ENCODE measurements at regions of chr17 and their contacts with region 1.

Region 1: DNA sequence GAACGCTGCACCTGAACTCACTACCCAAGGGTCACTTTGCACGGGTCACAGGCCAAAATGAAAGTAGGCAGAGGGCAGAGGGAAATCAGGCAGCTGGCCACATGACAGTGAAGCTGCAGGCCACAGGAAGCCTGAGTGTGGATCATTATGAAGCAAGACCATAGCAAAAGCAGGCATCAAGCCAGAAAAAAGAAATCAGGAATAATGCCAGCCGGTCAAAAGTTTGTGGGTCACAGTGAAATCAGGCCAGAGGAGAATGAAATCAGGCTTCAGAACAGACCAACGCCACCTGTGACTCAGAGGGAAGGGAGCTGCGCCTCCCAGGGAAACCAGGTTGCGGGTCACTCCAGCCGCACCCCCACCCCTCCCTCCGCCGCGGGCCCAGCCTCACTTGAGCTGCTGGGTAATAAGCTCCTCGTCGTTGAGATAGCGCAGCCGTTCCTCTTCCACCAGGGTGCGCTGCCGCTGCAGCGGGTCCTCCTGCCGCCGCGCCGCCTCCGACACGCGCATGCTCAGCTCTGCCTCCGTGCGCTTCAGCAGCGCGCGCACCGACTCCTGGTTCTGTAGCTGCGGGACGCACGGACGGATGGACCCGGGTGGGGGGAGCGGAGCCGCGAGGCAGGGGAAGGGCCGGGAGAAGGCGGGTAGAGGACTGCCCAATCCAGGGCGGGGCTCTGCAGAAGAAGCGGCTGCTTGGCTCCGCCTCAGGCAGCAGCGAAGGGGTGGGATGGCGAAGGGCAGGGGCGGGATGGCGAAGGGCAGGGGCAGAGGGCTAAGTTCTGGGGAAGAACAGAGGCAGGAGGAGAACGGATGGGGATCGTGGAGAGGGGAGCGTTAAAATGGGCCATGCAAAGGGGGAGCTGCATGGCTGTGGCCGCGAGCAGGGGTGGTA is 47.7 kb downstream of the SRCIN1 start:
- DNase-seq: peak; percentile 95 to 96
- H3K4me3 ChIP-seq: peak overlapping the region; percentile 57; the same call in 1 of the 2 replicates
- H3K27ac ChIP-seq: peak overlapping the region; percentile 91
- H3K4me1 ChIP-seq: peaks cover 54% of the 10 kb centered on the region
- H3K27me3 ChIP-seq: no peaks in the 10 kb centered on the region
- CTCF ChIP-seq: peak; percentile 78

Region 2: DNA sequence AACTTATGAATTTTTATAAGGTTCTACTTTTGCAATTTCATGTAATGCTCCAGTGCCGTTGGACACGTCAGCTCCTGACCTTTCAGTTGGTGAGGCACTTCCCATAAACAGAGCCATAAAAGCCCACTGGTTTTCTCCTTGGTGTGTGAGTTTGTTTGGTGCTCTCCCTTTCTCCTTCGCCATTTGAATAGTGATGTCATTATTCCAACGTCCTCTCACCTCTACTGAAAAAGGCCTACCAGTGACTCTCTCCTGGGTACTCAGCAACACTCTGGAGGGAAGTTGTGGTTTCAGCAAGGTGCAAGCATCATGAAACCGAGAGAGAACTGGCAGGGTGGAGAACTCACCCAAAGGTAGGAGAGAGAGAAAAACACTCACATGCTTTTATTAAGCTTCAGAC is 783.6 kb before region 1 on chr17:
- CTCF ChIA-PET with region 1: no interaction called
- POLR2A ChIA-PET with region 1: no interaction called
- intact Hi-C with region 1: no loop called
- DNase-seq: no peak
- H3K4me3 ChIP-seq: no peak overlapping the region
- H3K27ac ChIP-seq: no peak overlapping the region
- H3K4me1 ChIP-seq: no peaks in the 10 kb centered on the region
- H3K27me3 ChIP-seq: no peaks in the 10 kb centered on the region
- CTCF ChIP-seq: no peak

Region 3: DNA sequence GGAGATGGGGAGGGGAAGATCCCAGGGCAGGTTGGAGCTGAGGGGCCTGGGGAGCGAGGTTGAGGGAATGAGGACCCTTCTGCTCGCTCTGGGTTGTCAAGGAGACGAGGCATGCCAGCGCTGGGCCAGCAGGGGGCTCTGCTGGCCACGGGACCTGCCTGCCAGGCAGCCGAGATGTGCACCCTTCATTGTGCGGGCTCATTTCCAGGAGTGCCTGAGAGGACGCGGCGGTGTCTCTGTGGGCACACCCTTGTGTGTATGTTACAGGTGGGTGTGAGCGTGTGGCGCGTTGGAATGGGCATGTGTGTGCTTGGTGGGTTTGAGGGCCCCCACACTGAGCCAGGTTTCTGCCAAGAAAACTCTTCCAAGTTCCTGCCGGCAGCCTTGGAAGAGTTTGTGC is 113.9 kb before region 1 on chr17:
- CTCF ChIA-PET with region 1: interaction called, 3 read pairs
- POLR2A ChIA-PET with region 1: interaction called, 13 read pairs
- intact Hi-C with region 1: no loop called
- DNase-seq: peak in 1 of 2 experiments; percentile 72
- H3K4me3 ChIP-seq: no peak overlapping the region
- H3K27ac ChIP-seq: no peak overlapping the region
- H3K4me1 ChIP-seq: peaks cover 48% of the 10 kb centered on the region
- H3K27me3 ChIP-seq: no peaks in the 10 kb centered on the region
- CTCF ChIP-seq: peak; percentile 91

Region 4: DNA sequence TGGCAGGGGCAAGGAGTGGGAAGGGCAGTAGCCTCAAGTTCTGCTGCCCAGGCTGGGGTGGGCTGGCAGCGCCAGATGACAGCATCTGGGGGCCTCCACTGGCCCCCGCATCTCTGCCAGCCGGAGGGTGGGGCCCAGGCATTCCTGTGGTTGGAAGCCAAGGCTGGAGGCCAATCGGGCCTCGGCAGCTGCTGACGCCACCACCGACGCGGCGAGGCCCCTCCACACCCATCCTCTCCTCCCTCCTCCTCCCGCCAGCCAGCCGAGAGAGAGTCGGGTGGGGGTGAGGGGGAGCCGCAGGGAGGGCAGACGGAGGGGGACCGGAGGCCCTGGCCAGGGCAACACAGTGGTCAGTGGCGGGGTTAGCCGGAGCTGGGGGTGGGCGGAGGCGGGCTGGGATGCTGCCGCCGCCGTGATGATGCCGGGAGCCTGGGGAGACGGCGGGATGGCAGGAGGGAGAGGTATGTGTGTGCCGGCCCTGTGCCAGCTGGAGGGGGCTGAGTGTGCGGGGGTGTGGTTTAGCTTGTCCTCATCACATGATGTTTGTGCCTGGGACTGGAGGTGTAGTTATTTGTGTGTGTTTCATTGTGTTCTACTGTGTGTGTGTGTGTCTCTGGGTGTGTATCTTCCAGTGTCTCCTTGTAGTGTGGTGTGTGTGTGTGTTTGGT is 93.2 kb before region 1 on chr17:
- CTCF ChIA-PET with region 1: no interaction called
- POLR2A ChIA-PET with region 1: interaction called, 20 read pairs
- intact Hi-C with region 1: no loop called
- DNase-seq: peak in 1 of 2 experiments; percentile 89
- H3K4me3 ChIP-seq: no peak overlapping the region
- H3K27ac ChIP-seq: no peak overlapping the region
- H3K4me1 ChIP-seq: no peaks in the 10 kb centered on the region; the same call in 1 of the 2 replicates
- H3K27me3 ChIP-seq: no peaks in the 10 kb centered on the region
- CTCF ChIP-seq: no peak

Region 5: GRCh38 chr17:38572669-38573365 is 14.7 kb after region 1 on chr17:
- CTCF ChIA-PET with region 1: interaction called, 4 read pairs
- POLR2A ChIA-PET with region 1: no interaction called
- intact Hi-C with region 1: loop called (anchors 2 kb)
- DNase-seq: peak in 1 of 2 experiments; percentile 47
- H3K4me3 ChIP-seq: peak overlapping the region; percentile 54; the same call in 1 of the 2 replicates
- H3K27ac ChIP-seq: no peak overlapping the region
- H3K4me1 ChIP-seq: peaks cover 11% of the 10 kb centered on the region
- H3K27me3 ChIP-seq: no peaks in the 10 kb centered on the region
- CTCF ChIP-seq: no peak

Region 6: GRCh38 chr17:38584350-38584925 is 26.4 kb after region 1 on chr17:
- CTCF ChIA-PET with region 1: interaction called, 27 read pairs
- POLR2A ChIA-PET with region 1: no interaction called
- intact Hi-C with region 1: loop called (anchors 1 kb)
- DNase-seq: peak; percentile 81 to 91
- H3K4me3 ChIP-seq: peak overlapping the region; percentile 41; the same call in 1 of the 2 replicates
- H3K27ac ChIP-seq: peak overlapping the region; percentile 84
- H3K4me1 ChIP-seq: peaks cover 57% of the 10 kb centered on the region
- H3K27me3 ChIP-seq: no peaks in the 10 kb centered on the region
- CTCF ChIP-seq: peak; percentile 95

Region 7: DNA sequence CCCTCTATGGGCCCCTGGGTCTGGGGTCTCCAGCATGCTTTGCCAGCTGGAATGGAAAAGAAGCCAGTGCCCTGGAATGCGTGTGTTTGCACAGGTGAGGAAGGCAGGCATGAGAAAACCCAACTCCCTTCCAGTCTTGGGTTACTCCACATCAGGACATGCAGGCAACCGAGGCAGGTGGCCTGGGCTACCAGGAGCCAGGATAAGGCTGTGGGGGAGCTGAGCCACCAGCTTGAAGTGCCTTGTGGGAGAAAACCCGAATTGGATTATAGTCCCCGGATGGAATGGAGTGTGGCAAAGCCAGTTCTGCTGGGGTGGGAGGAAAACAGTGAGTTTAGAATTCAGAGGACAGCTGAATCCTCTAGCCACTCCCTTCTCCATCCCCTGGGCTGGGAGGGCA is 40.5 kb after region 1 on chr17:
- CTCF ChIA-PET with region 1: interaction called, 3 read pairs
- POLR2A ChIA-PET with region 1: no interaction called
- intact Hi-C with region 1: loop called (anchors 5 kb)
- DNase-seq: peak; percentile 82 to 87
- H3K4me3 ChIP-seq: no peak overlapping the region
- H3K27ac ChIP-seq: no peak overlapping the region
- H3K4me1 ChIP-seq: peaks cover 4% of the 10 kb centered on the region; the same call in 1 of the 2 replicates
- H3K27me3 ChIP-seq: no peaks in the 10 kb centered on the region
- CTCF ChIP-seq: no peak

Region 8: GRCh38 chr17:38768417-38768816 is 210.3 kb after region 1 on chr17:
- CTCF ChIA-PET with region 1: no interaction called
- POLR2A ChIA-PET with region 1: no interaction called
- intact Hi-C with region 1: no loop called
- DNase-seq: no peak
- H3K4me3 ChIP-seq: no peak overlapping the region
- H3K27ac ChIP-seq: no peak overlapping the region
- H3K4me1 ChIP-seq: no peaks in the 10 kb centered on the region
- H3K27me3 ChIP-seq: no peaks in the 10 kb centered on the region
- CTCF ChIP-seq: no peak

Measured in PC-9 (cell line).